ENCODE measurements at regions of chr5 and their contacts with region 1.

Region 1: DNA sequence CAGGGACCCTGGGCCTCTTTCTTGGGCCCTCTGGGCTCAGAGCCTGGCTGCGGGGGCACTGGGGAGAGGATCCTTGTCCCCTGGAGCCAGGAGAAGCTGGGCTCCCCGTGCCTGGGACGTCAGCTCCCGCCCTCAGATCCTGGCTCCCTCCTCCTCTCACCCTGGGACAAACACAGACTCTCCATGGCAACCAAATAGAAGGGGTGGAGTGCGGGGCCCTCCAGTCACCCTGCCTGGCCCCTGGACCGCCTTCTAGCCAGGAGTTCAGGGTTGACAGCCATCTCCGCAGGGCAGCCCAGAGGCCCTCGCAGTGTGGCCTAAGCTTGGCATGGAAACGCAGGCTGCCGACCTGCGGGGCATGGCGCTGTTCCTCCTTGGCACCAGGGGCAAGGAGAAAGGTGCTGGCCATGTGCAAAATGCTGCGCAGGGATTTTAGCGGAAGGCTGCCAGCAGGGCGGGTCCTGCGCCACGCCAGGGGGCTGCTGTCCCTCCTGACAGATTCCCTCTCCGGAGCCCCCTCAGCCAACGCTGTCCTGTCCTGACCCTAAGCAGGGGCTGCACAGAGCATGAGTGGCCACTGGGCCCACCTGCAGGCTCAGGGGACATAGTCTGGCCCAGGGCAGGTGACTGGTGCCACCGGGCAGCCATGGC is 1.0 kb downstream of the ZDHHC11 start:
- DNase-seq: no peak
- ATAC-seq: no peak
- H3K4me3 ChIP-seq: no peak overlapping the region
- H3K27ac ChIP-seq: no peak overlapping the region
- H3K4me1 ChIP-seq: no peaks in the 10 kb centered on the region
- H3K27me3 ChIP-seq: no peaks in the 10 kb centered on the region
- CTCF ChIP-seq: no peak
- EP300 ChIP-seq: no peak
- POLR2A ChIP-seq: no peak
- RAD21 ChIP-seq: no peak

Region 2: DNA sequence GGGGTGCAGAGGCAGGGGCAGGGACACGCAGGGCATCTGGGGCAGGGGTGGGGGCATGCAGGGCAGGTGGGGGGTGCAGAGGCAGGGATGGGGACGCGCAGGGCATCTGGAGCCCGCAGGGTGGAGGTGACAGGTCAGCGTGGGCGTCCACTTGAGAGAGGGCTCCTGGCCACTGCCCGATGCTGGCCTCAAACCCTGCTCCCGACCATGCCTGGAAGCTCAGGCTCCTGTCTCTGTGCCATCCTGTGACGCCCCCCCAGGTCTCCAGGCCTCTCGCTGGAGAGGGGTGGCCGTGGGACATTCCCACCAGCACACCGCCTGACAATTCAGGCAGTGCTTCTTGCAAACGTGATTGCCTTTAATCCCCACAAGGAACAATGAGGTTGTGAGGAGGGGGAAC is 98.3 kb before region 1 on chr5:
- CTCF ChIA-PET with region 1: no interaction called
- POLR2A ChIA-PET with region 1: no interaction called
- RAD21 ChIA-PET with region 1: no interaction called
- SMC1A ChIA-PET with region 1: no interaction called
- in situ Hi-C with region 1: loop called (anchors 5 kb)
- intact Hi-C with region 1: loop called (anchors 2 kb)
- DNase-seq: no peak
- ATAC-seq: no peak
- H3K4me3 ChIP-seq: no peak overlapping the region
- H3K27ac ChIP-seq: no peak overlapping the region
- H3K4me1 ChIP-seq: no peaks in the 10 kb centered on the region
- H3K27me3 ChIP-seq: no peaks in the 10 kb centered on the region
- CTCF ChIP-seq: no peak
- EP300 ChIP-seq: no peak
- POLR2A ChIP-seq: no peak
- RAD21 ChIP-seq: no peak

Region 3: DNA sequence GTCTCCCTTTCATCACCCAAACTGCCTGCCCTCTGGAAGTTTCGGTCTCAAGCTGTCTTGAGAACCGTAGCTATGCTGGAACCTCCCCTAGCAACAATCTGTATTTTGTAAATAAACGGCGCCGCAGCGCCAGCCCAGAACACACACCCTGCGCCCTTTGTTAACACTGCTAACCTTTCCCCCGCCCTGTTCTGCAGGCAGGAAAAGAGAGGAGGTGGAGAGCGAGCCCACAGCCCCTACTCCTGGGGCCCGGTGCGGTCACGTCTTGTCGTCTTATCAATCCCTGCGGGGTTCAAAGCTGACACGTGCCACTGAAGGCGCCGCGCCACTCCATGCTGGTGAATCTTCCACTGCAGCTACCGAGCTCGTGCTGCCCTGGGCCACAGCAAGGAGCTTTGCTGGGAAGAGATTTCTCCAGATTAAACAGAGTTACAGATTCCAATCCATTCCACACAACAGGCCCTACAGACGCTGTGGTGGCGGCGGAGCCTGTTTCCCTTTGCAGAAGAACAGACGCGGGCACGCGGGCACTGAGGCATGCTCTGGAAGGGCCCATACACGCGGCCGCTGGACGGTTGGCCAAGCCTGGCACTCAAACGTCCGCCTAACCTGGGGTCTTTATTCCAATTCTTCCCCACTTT is 90.5 kb before region 1 on chr5:
- CTCF ChIA-PET with region 1: no interaction called
- POLR2A ChIA-PET with region 1: no interaction called
- RAD21 ChIA-PET with region 1: no interaction called
- SMC1A ChIA-PET with region 1: no interaction called
- in situ Hi-C with region 1: loop called (anchors 5 kb)
- intact Hi-C with region 1: loop called (anchors 2 kb)
- DNase-seq: no peak
- ATAC-seq: no peak
- H3K4me3 ChIP-seq: no peak overlapping the region
- H3K27ac ChIP-seq: no peak overlapping the region
- H3K4me1 ChIP-seq: no peaks in the 10 kb centered on the region
- H3K27me3 ChIP-seq: no peaks in the 10 kb centered on the region
- CTCF ChIP-seq: no peak
- EP300 ChIP-seq: no peak
- POLR2A ChIP-seq: no peak
- RAD21 ChIP-seq: no peak